ENCODE measurements at regions of chr6 and their contacts with region 1.

Region 1: GRCh38 chr6:150685860-150686259 is 86.2 kb downstream of the PLEKHG1 start:
- DNase-seq: peak in 2 of 5 donors; percentile 29 to 61
- ATAC-seq: no peak
- H3K4me3 ChIP-seq: peak overlapping the region in 3 of 12 donors; percentile 3 to 55 (median 51)
- H3K27ac ChIP-seq: peak overlapping the region in 9 of 12 donors; percentile 50 to 92 (median 86)
- H3K4me1 ChIP-seq: peaks cover 0 to 61% (median 26%) of the 10 kb centered on the region in 12 donors
- H3K27me3 ChIP-seq: no peaks in the 10 kb centered on the region
- CTCF ChIP-seq: peak in 11 of 12 donors; percentile 40 to 66 (median 56)
- POLR2A ChIP-seq: no peak

Region 2: DNA sequence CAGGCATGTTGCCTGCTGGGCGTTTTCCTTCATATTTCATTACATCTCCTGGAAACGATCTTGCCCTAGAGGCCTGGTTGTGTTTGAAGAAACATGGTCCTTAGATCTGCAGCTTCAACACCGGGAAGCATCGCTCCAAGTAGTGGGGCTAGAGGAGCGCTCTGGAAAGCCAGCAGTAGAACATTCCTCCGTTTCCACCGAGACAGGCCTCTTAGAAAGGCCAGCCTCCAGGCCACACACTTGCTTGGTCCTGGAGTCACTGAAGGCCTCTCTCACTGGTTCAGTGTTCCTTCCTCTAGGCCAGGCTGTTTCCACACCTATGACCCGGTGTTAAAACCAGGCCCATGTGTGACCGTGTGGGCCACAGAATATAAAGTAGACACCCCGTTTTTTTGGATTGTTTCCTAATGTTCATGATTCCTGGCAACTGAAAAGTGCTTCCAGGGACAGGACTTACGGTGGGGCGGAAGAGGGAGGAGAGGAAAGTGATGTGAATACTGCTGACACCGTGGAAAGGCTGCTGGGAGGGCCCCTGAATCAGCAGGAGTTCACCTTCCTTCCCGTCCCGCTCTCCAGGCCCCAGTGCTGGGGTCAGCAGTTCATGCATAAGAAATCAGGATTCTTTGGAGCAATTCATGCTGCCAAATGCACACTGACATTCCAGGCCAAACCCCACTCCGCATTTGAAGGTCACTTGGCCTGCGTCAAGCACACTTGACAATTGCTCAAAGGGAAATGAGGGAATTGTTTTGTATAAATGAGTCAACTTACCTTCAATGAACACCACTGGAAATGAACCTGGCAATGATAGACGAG is 233.2 kb before region 1 on chr6:
- intact Hi-C with region 1: loop called in 1 of 10 experiments (anchors 10 kb)
- DNase-seq: peak; percentile 52 to 79 (median 73)
- ATAC-seq: peak; percentile 88 to 97 (median 91)
- H3K4me3 ChIP-seq: no peak overlapping the region
- H3K27ac ChIP-seq: peak overlapping the region; percentile 5 to 91 (median 76)
- H3K4me1 ChIP-seq: peaks cover 0 to 17% (median 8%) of the 10 kb centered on the region in 12 donors
- H3K27me3 ChIP-seq: no peaks in the 10 kb centered on the region
- CTCF ChIP-seq: no peak
- POLR2A ChIP-seq: no peak

Region 3: DNA sequence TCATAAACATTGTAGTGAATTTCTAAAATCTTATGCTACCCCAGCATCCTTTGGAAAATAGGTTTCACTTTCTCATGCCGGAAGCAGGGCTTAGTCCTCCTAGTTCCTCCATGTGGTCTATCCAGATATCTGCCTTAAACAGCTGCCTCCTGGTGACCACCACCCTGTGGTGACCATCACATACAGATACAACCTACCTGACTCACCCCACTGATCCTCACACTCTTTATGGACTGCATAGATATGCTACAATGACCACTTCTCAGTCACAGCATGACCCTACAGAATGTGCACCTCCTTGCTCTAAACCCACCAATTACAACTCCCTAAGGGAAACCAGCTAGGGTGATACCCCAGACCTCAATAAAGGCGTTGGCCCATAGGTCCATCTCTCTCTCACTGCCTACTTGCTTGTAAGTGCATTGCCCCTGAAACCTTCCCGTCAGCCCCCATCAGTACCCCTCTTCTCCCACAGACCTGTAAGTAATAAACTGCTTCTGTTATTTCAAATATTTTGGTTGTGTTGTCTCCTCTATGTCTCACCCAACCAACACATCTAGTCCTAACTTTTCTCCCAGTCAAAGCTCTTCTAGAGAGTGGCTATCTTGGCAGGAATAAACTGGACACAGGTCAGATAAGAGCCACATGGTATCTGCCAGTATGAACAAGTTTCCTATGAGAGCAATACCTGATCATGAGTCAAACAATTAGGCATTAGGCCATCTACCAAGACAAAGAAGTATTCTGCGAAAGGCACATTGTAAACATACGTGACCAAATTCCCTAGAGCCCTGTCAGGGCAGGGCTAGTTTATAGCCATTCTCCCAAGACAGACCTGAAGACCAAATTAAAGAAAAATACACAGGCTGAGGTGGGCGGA is 125.6 kb before region 1 on chr6:
- intact Hi-C with region 1: no loop called
- DNase-seq: no peak
- ATAC-seq: no peak
- H3K4me3 ChIP-seq: no peak overlapping the region
- H3K27ac ChIP-seq: no peak overlapping the region
- H3K4me1 ChIP-seq: no peaks in the 10 kb centered on the region
- H3K27me3 ChIP-seq: no peaks in the 10 kb centered on the region
- CTCF ChIP-seq: no peak
- POLR2A ChIP-seq: no peak

Region 4: GRCh38 chr6:150617496-150618460 is 68.1 kb before region 1 on chr6:
- intact Hi-C with region 1: loop called in 1 of 10 experiments (anchors 5 kb)
- DNase-seq: no peak
- ATAC-seq: no peak
- H3K4me3 ChIP-seq: no peak overlapping the region
- H3K27ac ChIP-seq: peak overlapping the region in 9 of 12 donors; percentile 12 to 55 (median 45)
- H3K4me1 ChIP-seq: peaks cover 0 to 57% (median 26%) of the 10 kb centered on the region in 12 donors
- H3K27me3 ChIP-seq: no peaks in the 10 kb centered on the region
- CTCF ChIP-seq: no peak
- POLR2A ChIP-seq: no peak